HCT116 (cell line): ENCODE measurements at regions of chr2 and their contacts with region 1.

Region 1: GRCh38 chr2:46887028-46887885 is 28.3 kb downstream of the MCFD2 start:
- DNase-seq: no peak
- ATAC-seq: no peak
- H3K4me3 ChIP-seq: no peak overlapping the region
- H3K27ac ChIP-seq: no peak overlapping the region
- H3K4me1 ChIP-seq: peaks cover 5 to 23% of the 10 kb centered on the region in 2 experiments; a peak in 3 of 4 replicates
- H3K27me3 ChIP-seq: no peaks in the 10 kb centered on the region
- CTCF ChIP-seq: no peak
- POLR2A ChIP-seq: no peak
- RAD21 ChIP-seq: no peak

Region 2: GRCh38 chr2:46010925-46011490 is 876.2 kb before region 1 on chr2:
- CTCF ChIA-PET with region 1: no interaction called
- POLR2A ChIA-PET with region 1: no interaction called
- RAD21 ChIA-PET with region 1: no interaction called
- intact Hi-C with region 1: loop called (anchors 2 kb)
- DNase-seq: peak; percentile 19
- ATAC-seq: peak; percentile 76
- H3K4me3 ChIP-seq: no peak overlapping the region
- H3K27ac ChIP-seq: no peak overlapping the region
- H3K4me1 ChIP-seq: peaks cover 0 to 8% of the 10 kb centered on the region in 2 experiments; a peak in 1 of 4 replicates
- H3K27me3 ChIP-seq: no peaks in the 10 kb centered on the region
- CTCF ChIP-seq: peak; percentile 56 to 82 (median 72)
- POLR2A ChIP-seq: no peak
- RAD21 ChIP-seq: peak; percentile 84

Region 3: GRCh38 chr2:46062637-46063412 is 824.4 kb before region 1 on chr2:
- CTCF ChIA-PET with region 1: no interaction called
- POLR2A ChIA-PET with region 1: no interaction called
- RAD21 ChIA-PET with region 1: no interaction called
- intact Hi-C with region 1: loop called (anchors 5 kb)
- DNase-seq: peak; percentile 54
- ATAC-seq: peak; percentile 85
- H3K4me3 ChIP-seq: no peak overlapping the region
- H3K27ac ChIP-seq: no peak overlapping the region
- H3K4me1 ChIP-seq: no peaks in the 10 kb centered on the region
- H3K27me3 ChIP-seq: no peaks in the 10 kb centered on the region
- CTCF ChIP-seq: peak; percentile 74 to 91 (median 80)
- POLR2A ChIP-seq: no peak
- RAD21 ChIP-seq: peak; percentile 83

Region 4: GRCh38 chr2:46632349-46632748 is 254.9 kb before region 1 on chr2:
- CTCF ChIA-PET with region 1: no interaction called
- POLR2A ChIA-PET with region 1: no interaction called
- RAD21 ChIA-PET with region 1: interaction called, 3 read pairs
- intact Hi-C with region 1: loop called (anchors 1 kb)
- DNase-seq: peak; percentile 43
- ATAC-seq: peak; percentile 50; the same call in 1 of the 2 replicates
- H3K4me3 ChIP-seq: no peak overlapping the region
- H3K27ac ChIP-seq: no peak overlapping the region
- H3K4me1 ChIP-seq: no peaks in the 10 kb centered on the region
- H3K27me3 ChIP-seq: no peaks in the 10 kb centered on the region
- CTCF ChIP-seq: peak; percentile 50 to 81 (median 67)
- POLR2A ChIP-seq: no peak
- RAD21 ChIP-seq: peak; percentile 82

Region 5: DNA sequence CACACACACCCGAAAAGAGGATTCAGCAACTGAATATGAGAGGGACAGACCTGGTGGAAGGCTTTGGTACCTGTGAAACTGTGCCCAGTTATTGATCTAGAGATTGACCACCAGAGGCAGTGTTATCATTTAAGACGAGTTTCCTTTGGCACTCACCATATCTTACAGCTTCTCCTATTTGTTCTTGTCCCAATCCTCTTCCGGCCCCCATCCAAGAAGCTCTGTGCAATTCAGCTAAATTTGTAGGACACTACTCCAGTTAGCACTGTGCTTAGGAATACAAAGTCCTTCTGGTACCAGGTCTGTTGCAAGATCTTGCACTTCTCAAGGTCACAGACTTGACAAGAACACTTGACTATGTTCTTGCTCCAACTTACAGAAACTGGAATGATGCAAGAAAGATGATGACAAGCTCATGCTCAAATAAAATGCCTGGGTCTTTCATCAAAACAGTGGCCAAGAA is 230.2 kb before region 1 on chr2:
- CTCF ChIA-PET with region 1: interaction called, 4 read pairs
- POLR2A ChIA-PET with region 1: no interaction called
- RAD21 ChIA-PET with region 1: no interaction called
- intact Hi-C with region 1: loop called (anchors 5 kb)
- DNase-seq: peak; percentile 54
- ATAC-seq: peak; percentile 96
- H3K4me3 ChIP-seq: no peak overlapping the region
- H3K27ac ChIP-seq: no peak overlapping the region
- H3K4me1 ChIP-seq: peaks cover 0 to 16% of the 10 kb centered on the region in 2 experiments; a peak in 3 of 4 replicates
- H3K27me3 ChIP-seq: no peaks in the 10 kb centered on the region
- CTCF ChIP-seq: peak; percentile 61 to 66 (median 65)
- POLR2A ChIP-seq: no peak
- RAD21 ChIP-seq: peak; percentile 72

Region 6: GRCh38 chr2:47620770-47621437 is 733.6 kb after region 1 on chr2:
- CTCF ChIA-PET with region 1: no interaction called
- POLR2A ChIA-PET with region 1: no interaction called
- RAD21 ChIA-PET with region 1: no interaction called
- intact Hi-C with region 1: no loop called
- DNase-seq: no peak
- ATAC-seq: no peak
- H3K4me3 ChIP-seq: no peak overlapping the region
- H3K27ac ChIP-seq: no peak overlapping the region
- H3K4me1 ChIP-seq: no peaks in the 10 kb centered on the region
- H3K27me3 ChIP-seq: no peaks in the 10 kb centered on the region
- CTCF ChIP-seq: no peak
- POLR2A ChIP-seq: no peak
- RAD21 ChIP-seq: no peak